ENCODE measurements at regions of chr14 and their contacts with region 1.

Region 1: DNA sequence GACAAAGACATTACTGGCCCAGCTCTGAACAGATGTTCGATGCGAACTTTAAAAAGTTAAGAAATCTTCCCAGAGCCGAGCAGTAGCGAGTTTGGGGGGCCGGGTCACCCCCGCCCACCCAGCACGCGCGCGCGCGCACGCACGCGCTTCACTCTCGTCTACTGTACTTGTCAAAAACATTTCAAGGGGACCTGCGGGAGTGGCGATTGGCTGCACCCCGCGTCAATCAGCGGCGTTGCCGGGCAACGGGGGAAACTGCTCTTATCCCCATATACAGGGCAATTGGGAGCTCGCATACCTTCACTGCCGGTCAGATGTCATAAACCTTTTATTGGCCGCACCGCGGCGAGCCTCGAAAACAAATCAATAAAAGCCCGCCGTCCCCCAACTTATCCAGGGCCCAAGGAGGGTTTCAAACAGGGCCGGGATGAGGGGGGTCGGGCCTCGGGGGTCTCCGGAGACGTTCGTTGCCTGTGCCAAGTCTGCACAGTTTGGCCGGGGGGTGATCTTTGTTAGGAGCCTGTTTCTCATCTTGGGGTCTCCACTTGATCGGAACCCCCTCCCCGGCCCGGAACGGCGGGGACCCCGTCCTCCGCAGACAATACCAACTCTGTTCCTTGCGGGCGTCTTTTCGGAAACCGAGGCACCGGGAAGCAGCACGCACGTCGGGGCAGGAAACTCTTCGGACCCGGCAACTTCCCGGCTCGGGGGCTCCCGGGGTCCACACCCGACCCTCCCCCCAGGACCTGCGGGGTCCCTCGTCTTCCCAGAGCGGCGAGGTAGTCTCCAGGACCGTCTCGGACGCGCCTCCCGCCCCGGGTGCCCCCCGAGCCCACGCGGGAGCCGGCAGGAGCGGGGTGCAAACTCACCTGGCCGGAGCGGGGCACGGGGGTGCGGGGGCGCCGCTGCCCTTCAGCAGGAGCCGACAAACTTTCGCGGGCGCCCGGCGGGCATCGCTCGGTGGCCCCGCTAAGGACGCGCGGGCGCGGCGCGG is 734 bp downstream of the FOXN3 start:
- DNase-seq: peak; percentile 99 to 100
- H3K4me3 ChIP-seq: peak overlapping the region; percentile 97 to 100
- H3K27ac ChIP-seq: peak overlapping the region; percentile 98 to 99
- H3K4me1 ChIP-seq: peaks cover 0 to 57% (median 19%) of the 10 kb centered on the region in 4 donors
- H3K27me3 ChIP-seq: no peaks in the 10 kb centered on the region
- CTCF ChIP-seq: no peak

Region 2: GRCh38 chr14:89040460-89041259 is 375.6 kb before region 1 on chr14:
- intact Hi-C with region 1: loop called (anchors 5 kb)
- DNase-seq: peak; percentile 90 to 95
- H3K4me3 ChIP-seq: peak overlapping the region; percentile 39 to 54
- H3K27ac ChIP-seq: peak overlapping the region; percentile 76 to 87
- H3K4me1 ChIP-seq: peaks cover 0 to 20% (median 12%) of the 10 kb centered on the region in 4 donors
- H3K27me3 ChIP-seq: peaks cover 0 to under 1% of the 10 kb centered on the region in 2 donors
- CTCF ChIP-seq: peak; percentile 90 to 95

Region 3: DNA sequence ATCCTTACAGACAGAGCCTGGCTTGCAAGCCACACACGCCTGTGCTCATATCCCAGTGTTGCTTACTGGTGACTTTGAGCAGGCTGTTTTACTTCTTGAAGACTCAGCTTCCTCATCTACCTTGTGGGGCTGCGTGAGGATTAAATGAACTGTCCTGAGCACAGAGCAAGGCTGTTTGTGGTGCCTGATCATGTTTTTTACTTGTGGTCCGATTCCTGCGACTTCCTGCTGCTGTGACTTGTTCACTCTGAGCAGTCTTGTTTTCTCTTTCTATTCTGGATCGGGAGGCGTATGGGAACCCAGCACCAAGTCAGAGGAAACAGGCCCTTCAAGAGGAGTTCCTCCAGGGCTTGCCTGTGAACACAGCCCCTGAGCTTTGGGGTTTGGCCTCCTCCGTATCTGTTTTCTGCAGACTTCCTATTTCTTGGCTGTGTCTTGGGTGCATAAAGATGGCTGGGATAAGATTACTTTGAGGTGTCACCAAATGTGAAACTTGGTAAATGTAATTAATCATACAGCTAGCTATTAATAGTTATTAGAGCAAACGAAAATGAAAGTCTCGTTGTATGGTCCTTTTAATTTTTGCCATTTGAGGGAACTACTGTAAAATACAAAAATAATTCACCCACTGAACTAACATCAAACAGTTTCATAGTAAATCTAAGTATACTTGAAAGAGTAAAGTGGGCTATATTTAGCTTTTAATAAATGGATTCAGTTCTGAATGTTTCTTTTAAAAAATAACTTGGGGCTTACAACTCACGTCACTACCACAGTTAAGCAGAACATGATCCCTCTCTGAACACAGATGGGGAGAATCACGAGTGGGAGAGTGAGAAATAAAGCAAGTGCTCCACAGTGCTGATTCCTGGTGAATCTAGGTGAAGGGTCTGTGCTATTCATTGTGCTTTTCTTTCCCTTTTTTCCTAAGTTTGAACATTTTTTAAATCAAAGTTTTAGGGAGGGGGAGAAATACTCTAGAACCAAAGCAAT is 250.8 kb before region 1 on chr14:
- intact Hi-C with region 1: loop called (anchors 10 kb)
- DNase-seq: no peak
- H3K4me3 ChIP-seq: peak overlapping the region in 1 of 2 donors; percentile 33
- H3K27ac ChIP-seq: peak overlapping the region; percentile 16 to 52
- H3K4me1 ChIP-seq: peaks cover 0 to 30% (median 16%) of the 10 kb centered on the region in 4 donors
- H3K27me3 ChIP-seq: no peaks in the 10 kb centered on the region
- CTCF ChIP-seq: no peak

Region 4: GRCh38 chr14:89237921-89238529 is 178.3 kb before region 1 on chr14:
- intact Hi-C with region 1: loop called (anchors 10 kb)
- DNase-seq: no peak
- H3K4me3 ChIP-seq: no peak overlapping the region
- H3K27ac ChIP-seq: peak overlapping the region in 1 of 2 donors; percentile 5
- H3K4me1 ChIP-seq: peaks cover 0 to 59% (median 33%) of the 10 kb centered on the region in 4 donors
- H3K27me3 ChIP-seq: no peaks in the 10 kb centered on the region
- CTCF ChIP-seq: peak; percentile 45 to 51

Region 5: GRCh38 chr14:89303457-89304435 is 112.6 kb before region 1 on chr14:
- intact Hi-C with region 1: loop called (anchors 5 kb)
- DNase-seq: peak; percentile 76 to 87
- H3K4me3 ChIP-seq: peak overlapping the region; percentile 18 to 21
- H3K27ac ChIP-seq: peak overlapping the region; percentile 86 to 87
- H3K4me1 ChIP-seq: peaks cover 14 to 55% (median 25%) of the 10 kb centered on the region in 4 donors
- H3K27me3 ChIP-seq: no peaks in the 10 kb centered on the region
- CTCF ChIP-seq: no peak

Region 6: DNA sequence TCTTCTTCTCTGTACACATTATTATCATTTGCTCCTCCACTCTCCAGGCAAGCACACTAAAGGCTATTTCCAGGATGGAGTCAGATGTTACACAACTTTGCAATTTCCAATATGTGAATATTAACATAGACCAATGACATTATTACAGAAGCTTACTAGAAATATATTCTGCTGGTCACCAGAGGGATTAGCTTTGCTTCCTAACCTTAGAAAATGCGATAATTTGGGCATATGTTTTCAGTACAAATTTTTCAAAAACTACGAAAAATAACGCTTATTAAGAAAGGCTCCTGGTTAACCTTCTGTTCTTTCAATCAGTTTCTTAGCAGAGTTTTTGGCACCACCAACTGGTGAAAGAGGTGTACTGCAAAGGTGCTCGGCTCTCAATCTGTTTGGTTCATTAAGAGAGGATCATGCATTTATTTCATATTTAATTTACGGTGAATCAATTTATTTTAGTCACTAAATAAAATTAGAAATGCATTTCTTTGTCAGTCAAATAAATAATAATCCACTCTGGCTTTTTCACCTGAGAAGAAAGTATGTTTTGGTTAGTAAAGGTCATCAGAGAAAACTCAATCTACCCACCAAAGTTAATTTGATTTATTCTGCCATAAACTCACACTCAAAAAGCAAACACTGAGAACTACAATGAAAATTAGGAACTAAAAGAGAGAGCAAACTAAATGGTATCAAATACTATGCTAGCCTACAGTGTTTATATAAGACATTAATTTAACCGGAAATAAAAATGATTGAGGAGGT is 499.0 kb after region 1 on chr14:
- intact Hi-C with region 1: loop called (anchors 10 kb)
- DNase-seq: peak in 1 of 2 donors; percentile 74
- H3K4me3 ChIP-seq: no peak overlapping the region
- H3K27ac ChIP-seq: no peak overlapping the region
- H3K4me1 ChIP-seq: peaks cover 0 to 30% (median 17%) of the 10 kb centered on the region in 4 donors
- H3K27me3 ChIP-seq: no peaks in the 10 kb centered on the region
- CTCF ChIP-seq: peak; percentile 90 to 92

Measured in tibial artery (tissue), 4 donors.